ENCODE measurements at regions of chr6 and their contacts with region 1.

Region 1: DNA sequence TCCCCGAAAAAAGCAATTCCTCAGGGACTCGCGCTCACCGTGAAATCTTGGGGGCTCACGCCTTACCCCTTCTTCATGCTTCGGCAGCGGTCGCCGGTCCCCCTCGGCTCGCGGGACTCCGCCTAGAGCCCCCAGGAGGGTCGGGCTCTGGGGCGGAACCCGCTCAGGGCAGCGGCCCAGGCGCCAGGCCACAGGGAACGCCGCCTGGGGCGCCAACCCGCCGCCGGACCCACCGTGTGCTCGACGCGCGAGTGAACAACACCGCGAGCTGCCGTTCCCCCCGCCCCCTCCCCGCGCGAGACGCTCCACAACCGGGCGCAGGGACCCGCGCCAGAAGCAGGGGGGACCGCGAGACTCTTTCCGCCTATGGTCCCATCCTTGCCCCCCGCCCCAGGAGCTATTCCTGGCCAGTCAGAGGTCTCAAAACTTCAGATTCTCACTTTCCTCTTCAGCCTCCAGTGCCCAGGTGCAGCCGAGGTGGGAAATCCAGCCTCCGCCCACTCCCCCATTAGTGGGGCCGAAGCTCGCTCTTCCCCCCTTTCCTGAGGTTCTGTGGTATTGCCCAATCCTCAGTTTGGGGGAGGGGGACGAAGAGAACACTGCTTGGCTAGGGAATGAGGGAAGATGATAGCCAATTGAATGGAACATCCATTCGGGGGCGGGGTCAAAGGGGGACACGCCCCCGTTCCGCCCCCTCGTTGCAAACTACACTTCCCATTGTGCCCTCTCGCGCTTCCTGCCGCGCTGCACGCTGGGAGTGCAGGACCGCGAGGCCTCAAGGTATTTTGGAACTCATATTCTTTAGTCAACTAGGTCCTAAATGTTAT is at the start of gene WASF1:
- DNase-seq: peak; percentile 82 to 93 (median 88)
- H3K4me3 ChIP-seq: peak within 1 kb of the TSS; percentile 99
- H3K4me3 Mint-ChIP-seq: peak within 1 kb of the TSS in 5 of 7 donors; percentile 82 to 94 (median 86)
- H3K27ac ChIP-seq: peak within 1 kb of the TSS; percentile 89
- H3K27ac Mint-ChIP-seq: peak within 1 kb of the TSS; percentile 1 to 98 (median 80)
- H3K4me1 ChIP-seq: peaks cover 37% of the 10 kb centered on the region
- H3K4me1 Mint-ChIP-seq: peaks cover 8 to 10% (median 9%) of the 10 kb centered on the region in 3 donors
- H3K27me3 ChIP-seq: peaks cover 11% of the 10 kb centered on the region
- H3K27me3 Mint-ChIP-seq: peaks cover 11 to 14% of the 10 kb centered on the region in 2 donors
- total RNA-seq, gene WASF1: 1.8 to 2.4 TPM

Region 2: GRCh38 chr6:110214338-110214737 is 34.7 kb after region 1 on chr6:
- CTCF ChIA-PET with region 1: interaction called, 4 read pairs
- POLR2A ChIA-PET with region 1: interaction called, 19 read pairs
- DNase-seq: no peak
- H3K4me3 ChIP-seq: no peak overlapping the region
- H3K4me3 Mint-ChIP-seq: no peak overlapping the region
- H3K27ac ChIP-seq: no peak overlapping the region
- H3K27ac Mint-ChIP-seq: peak overlapping the region in 1 of 8 donors; percentile 29
- H3K4me1 ChIP-seq: no peaks in the 10 kb centered on the region
- H3K4me1 Mint-ChIP-seq: no peaks in the 10 kb centered on the region
- H3K27me3 ChIP-seq: no peaks in the 10 kb centered on the region
- H3K27me3 Mint-ChIP-seq: no peaks in the 10 kb centered on the region